Naive thymus-derived CD4-positive, alpha-beta T cell (primary cell): ENCODE measurements at regions of chr4 and their contacts with region 1.

Region 1: GRCh38 chr4:6873792-6874461 is 35.7 kb upstream of the TBC1D14 start:
- DNase-seq: peak; percentile 62 to 80 (median 73)
- ATAC-seq: peak; percentile 81
- H3K4me3 ChIP-seq: no peak overlapping the region
- H3K4me3 Mint-ChIP-seq: no peak overlapping the region
- H3K27ac ChIP-seq: no peak overlapping the region
- H3K27ac Mint-ChIP-seq: peak overlapping the region in 3 of 9 donors; percentile 53 to 59 (median 54)
- H3K4me1 ChIP-seq: no peaks in the 10 kb centered on the region
- H3K4me1 Mint-ChIP-seq: peaks cover 0 to 20% (median 6%) of the 10 kb centered on the region in 7 donors
- H3K27me3 ChIP-seq: no peaks in the 10 kb centered on the region
- H3K27me3 Mint-ChIP-seq: no peaks in the 10 kb centered on the region

Region 2: DNA sequence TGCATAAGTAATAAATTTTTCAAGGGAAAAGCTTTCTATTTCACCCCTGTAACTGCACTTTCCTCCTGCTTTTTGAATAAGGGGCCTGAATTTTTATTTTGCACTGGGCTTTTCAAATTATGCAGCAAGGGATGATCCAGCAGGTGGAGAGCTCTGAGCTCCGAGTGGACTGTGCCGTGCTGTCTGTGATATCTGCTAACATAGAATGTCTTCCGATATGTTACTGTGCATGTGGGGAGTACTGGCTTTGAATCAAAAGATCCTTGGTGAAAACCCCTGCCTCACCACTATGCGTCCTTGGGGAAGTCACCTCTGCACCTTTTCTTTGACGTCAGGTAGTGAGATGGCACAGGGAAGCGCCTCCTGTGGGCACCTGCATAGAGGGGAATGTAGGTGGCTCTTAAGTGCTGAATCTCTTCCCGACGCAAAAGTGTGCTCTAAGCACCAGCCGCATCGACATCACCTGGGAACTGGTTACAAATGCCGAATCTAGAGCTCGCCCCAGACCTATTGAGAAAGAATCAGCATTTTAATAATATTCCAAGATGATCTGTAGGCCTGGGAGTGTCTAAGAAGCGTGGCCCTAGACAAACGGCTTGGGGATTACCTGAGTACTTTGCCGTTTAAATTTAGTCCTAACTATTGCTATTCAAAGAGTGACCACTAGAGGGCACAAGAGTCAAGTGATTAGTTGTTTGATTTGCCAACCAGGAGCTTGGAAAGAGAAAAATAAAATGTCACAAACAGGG is 623.5 kb before region 1 on chr4:
- CTCF ChIA-PET with region 1: no interaction called
- POLR2A ChIA-PET with region 1: no interaction called
- intact Hi-C with region 1: loop called in 1 of 2 experiments (anchors 5 kb)
- DNase-seq: peak in 7 of 9 donors; percentile 39 to 71 (median 60)
- ATAC-seq: peak; percentile 72
- H3K4me3 ChIP-seq: no peak overlapping the region
- H3K4me3 Mint-ChIP-seq: no peak overlapping the region
- H3K27ac ChIP-seq: no peak overlapping the region
- H3K27ac Mint-ChIP-seq: no peak overlapping the region
- H3K4me1 ChIP-seq: no peaks in the 10 kb centered on the region
- H3K4me1 Mint-ChIP-seq: peaks cover 0 to 6% (median 0%) of the 10 kb centered on the region in 7 donors
- H3K27me3 ChIP-seq: no peaks in the 10 kb centered on the region
- H3K27me3 Mint-ChIP-seq: peaks cover 38 to 52% (median 49%) of the 10 kb centered on the region in 5 donors

Region 3: GRCh38 chr4:6546681-6547447 is 327.1 kb before region 1 on chr4:
- CTCF ChIA-PET with region 1: no interaction called
- POLR2A ChIA-PET with region 1: no interaction called
- intact Hi-C with region 1: loop called in 1 of 2 experiments (anchors 10 kb)
- DNase-seq: peak; percentile 13 to 57 (median 36)
- ATAC-seq: peak; percentile 82
- H3K4me3 ChIP-seq: no peak overlapping the region
- H3K4me3 Mint-ChIP-seq: no peak overlapping the region
- H3K27ac ChIP-seq: no peak overlapping the region
- H3K27ac Mint-ChIP-seq: peak overlapping the region in 1 of 9 donors; percentile 18
- H3K4me1 ChIP-seq: no peaks in the 10 kb centered on the region
- H3K4me1 Mint-ChIP-seq: peaks cover 0 to 4% (median 0%) of the 10 kb centered on the region in 7 donors
- H3K27me3 ChIP-seq: no peaks in the 10 kb centered on the region
- H3K27me3 Mint-ChIP-seq: peaks cover 4 to 77% (median 58%) of the 10 kb centered on the region in 5 donors

Region 4: DNA sequence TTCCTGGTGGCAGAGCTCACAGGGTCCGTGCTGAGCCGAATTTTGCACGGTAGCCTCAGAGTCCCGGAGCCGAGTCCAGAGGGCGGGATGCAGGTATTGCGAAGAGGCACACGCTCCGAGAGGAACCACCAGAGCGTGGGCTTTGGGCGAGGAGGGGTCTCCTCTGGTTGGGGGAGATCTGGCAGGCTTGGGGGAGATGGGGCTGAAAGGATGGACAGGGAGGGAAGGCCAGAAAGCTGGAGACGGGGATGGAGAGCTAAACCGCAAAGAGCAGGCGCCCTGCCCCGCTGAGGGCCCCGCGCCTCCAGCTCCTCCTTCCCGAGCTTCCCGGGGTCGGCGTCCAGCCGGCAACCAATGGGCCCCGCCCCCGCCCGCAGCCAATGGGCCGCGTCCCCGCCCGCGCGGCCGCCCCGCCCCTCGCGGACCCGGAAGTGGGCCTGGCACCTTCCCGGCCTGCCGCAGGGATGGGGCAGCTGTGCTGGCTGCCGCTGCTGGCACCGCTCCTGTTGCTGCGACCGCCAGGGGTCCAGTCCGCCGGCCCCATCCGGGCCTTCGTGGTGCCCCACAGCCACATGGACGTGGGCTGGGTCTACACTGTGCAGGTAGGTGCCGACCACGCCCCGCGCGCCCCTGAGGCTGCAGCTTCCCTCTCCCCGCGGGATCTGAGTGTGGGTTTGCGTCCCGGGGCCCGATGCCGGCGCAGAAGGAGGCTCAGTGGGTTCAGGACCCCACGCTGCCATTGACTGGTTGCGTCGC is 299.0 kb before region 1 on chr4 and contains the start of gene MAN2B2:
- CTCF ChIA-PET with region 1: interaction called, 4 read pairs
- POLR2A ChIA-PET with region 1: no interaction called
- intact Hi-C with region 1: loop called in 1 of 2 experiments (anchors 2 kb)
- DNase-seq: peak; percentile 68 to 92 (median 75)
- ATAC-seq: peak; percentile 96
- H3K4me3 ChIP-seq: peak within 1 kb of the TSS; percentile 92
- H3K4me3 Mint-ChIP-seq: peak within 1 kb of the TSS; percentile 84 to 94 (median 90)
- H3K27ac ChIP-seq: peak within 1 kb of the TSS; percentile 83
- H3K27ac Mint-ChIP-seq: peak within 1 kb of the TSS; percentile 68 to 91 (median 84)
- H3K4me1 ChIP-seq: peaks cover 5 to 9% of the 10 kb centered on the region in 2 donors
- H3K4me1 Mint-ChIP-seq: peaks cover 6 to 13% (median 8%) of the 10 kb centered on the region in 7 donors
- H3K27me3 ChIP-seq: no peaks in the 10 kb centered on the region
- H3K27me3 Mint-ChIP-seq: peaks cover 0 to 17% (median 0%) of the 10 kb centered on the region in 5 donors
- total RNA-seq, gene MAN2B2: 28.7 to 56.2 (median 39.4) TPM

Region 5: DNA sequence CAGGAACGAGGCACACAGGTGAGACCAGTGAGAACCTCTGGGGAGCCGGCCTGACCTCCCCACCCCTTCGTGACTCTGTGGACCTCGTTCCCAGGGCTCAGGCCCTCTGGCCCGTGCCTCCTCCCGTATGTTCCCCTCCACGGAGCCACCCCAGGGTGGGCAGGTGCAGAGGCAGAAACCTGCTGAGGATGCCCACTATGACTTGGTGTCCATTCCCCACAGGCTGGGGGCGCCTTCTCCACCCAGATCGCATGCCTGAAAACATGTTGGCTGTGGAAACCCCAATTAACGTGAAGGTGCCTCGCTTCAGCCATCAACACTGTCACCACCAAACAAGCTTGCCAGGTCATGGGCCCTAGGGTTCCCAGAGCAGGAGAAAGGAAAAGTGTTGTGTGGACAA is 130.9 kb before region 1 on chr4:
- CTCF ChIA-PET with region 1: interaction called, 3 read pairs
- POLR2A ChIA-PET with region 1: no interaction called
- intact Hi-C with region 1: loop called in 1 of 2 experiments (anchors 1 kb)
- DNase-seq: no peak
- ATAC-seq: no peak
- H3K4me3 ChIP-seq: no peak overlapping the region
- H3K4me3 Mint-ChIP-seq: no peak overlapping the region
- H3K27ac ChIP-seq: no peak overlapping the region
- H3K27ac Mint-ChIP-seq: no peak overlapping the region
- H3K4me1 ChIP-seq: no peaks in the 10 kb centered on the region
- H3K4me1 Mint-ChIP-seq: peaks cover 0 to 6% (median 0%) of the 10 kb centered on the region in 7 donors
- H3K27me3 ChIP-seq: no peaks in the 10 kb centered on the region
- H3K27me3 Mint-ChIP-seq: peaks cover 0 to 8% (median 0%) of the 10 kb centered on the region in 5 donors

Region 6: GRCh38 chr4:6859543-6859942 is 14.4 kb before region 1 on chr4:
- CTCF ChIA-PET with region 1: interaction called, 15 read pairs
- POLR2A ChIA-PET with region 1: interaction called, 3 read pairs
- intact Hi-C with region 1: no loop called
- DNase-seq: no peak
- ATAC-seq: no peak
- H3K4me3 ChIP-seq: no peak overlapping the region
- H3K4me3 Mint-ChIP-seq: no peak overlapping the region
- H3K27ac ChIP-seq: no peak overlapping the region
- H3K27ac Mint-ChIP-seq: peak overlapping the region in 1 of 9 donors; percentile 19
- H3K4me1 ChIP-seq: peaks cover 0 to 12% of the 10 kb centered on the region in 2 donors
- H3K4me1 Mint-ChIP-seq: peaks cover 0 to 15% (median 9%) of the 10 kb centered on the region in 7 donors
- H3K27me3 ChIP-seq: no peaks in the 10 kb centered on the region
- H3K27me3 Mint-ChIP-seq: no peaks in the 10 kb centered on the region

Region 7: GRCh38 chr4:7021930-7022658 is 148.2 kb after region 1 on chr4:
- CTCF ChIA-PET with region 1: no interaction called
- POLR2A ChIA-PET with region 1: no interaction called
- intact Hi-C with region 1: no loop called
- DNase-seq: no peak
- ATAC-seq: no peak
- H3K4me3 ChIP-seq: no peak overlapping the region
- H3K4me3 Mint-ChIP-seq: no peak overlapping the region
- H3K27ac ChIP-seq: no peak overlapping the region
- H3K27ac Mint-ChIP-seq: peak overlapping the region in 1 of 9 donors; percentile 26
- H3K4me1 ChIP-seq: no peaks in the 10 kb centered on the region
- H3K4me1 Mint-ChIP-seq: peaks cover 0 to 4% (median 0%) of the 10 kb centered on the region in 7 donors
- H3K27me3 ChIP-seq: no peaks in the 10 kb centered on the region
- H3K27me3 Mint-ChIP-seq: no peaks in the 10 kb centered on the region